ENCODE measurements at regions of chr18 and their contacts with region 1.

Region 1: GRCh38 chr18:45962461-45962860 is 4.7 kb downstream of the EPG5 start:
- DNase-seq: peak; percentile 24
- H3K4me3 Mint-ChIP-seq: no peak overlapping the region
- H3K27ac Mint-ChIP-seq: no peak overlapping the region
- H3K4me1 Mint-ChIP-seq: peaks cover 38% of the 10 kb centered on the region
- H3K27me3 Mint-ChIP-seq: no peaks in the 10 kb centered on the region
- CTCF ChIP-seq: no peak

Region 2: DNA sequence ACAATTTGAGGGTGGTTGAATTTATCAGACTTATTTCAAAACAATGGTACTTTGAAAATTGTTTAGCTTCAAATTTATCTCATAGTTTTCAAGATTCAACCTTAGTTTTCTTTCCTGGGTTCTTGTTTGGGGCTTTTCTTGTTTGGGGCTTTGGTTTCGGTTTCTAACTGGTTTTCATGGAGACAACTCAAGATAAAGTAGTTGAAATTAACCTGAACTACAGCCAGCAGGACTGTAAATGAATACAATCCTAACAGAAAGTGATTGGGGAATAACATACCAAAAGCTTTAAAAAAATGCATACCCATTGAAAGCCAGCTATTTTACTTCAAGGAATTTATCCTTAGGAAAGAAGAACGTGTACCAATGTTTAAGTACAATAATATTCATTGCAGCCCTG is 480.6 kb before region 1 on chr18:
- CTCF ChIA-PET with region 1: no interaction called
- POLR2A ChIA-PET with region 1: no interaction called
- intact Hi-C with region 1: no loop called
- DNase-seq: no peak
- H3K4me3 Mint-ChIP-seq: no peak overlapping the region
- H3K27ac Mint-ChIP-seq: no peak overlapping the region
- H3K4me1 Mint-ChIP-seq: peaks cover 5% of the 10 kb centered on the region
- H3K27me3 Mint-ChIP-seq: peaks cover 15% of the 10 kb centered on the region
- CTCF ChIP-seq: no peak

Region 3: DNA sequence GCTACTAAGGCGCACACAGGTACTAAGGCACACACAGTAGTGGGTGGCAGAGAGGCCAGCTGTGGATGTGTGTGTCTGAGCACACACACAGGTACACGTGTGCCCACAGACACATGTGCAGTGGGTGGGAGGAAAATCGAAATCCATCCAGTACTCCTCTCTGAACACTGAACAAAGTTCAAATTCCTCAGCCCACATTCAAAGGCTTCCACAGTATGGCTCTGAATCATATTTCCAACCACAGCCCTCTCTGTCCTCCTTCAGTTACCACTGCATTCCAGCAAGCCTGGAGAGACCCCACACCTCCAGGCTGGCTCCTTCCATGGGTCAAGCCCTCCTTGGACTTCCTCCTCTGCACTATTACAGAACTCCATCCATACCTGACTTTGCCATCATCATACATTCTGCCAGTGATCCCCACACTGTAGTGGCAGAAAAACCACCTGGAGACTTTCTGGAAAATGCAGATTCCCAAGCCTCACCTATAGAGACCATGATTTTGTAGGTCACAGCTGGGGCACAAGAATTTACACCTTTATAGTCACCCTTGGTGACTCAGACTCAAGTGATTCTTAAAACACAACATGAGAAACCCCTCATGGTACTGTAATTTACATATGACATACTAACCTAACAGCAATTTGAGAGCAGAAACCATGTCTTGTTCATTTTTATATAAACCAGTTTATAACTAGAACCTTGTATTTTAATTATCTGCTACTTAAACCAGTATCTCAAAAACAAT is 26.7 kb before region 1 on chr18:
- CTCF ChIA-PET with region 1: no interaction called
- POLR2A ChIA-PET with region 1: no interaction called
- intact Hi-C with region 1: no loop called
- DNase-seq: no peak
- H3K4me3 Mint-ChIP-seq: no peak overlapping the region
- H3K27ac Mint-ChIP-seq: no peak overlapping the region
- H3K4me1 Mint-ChIP-seq: peaks cover 8% of the 10 kb centered on the region
- H3K27me3 Mint-ChIP-seq: no peaks in the 10 kb centered on the region
- CTCF ChIP-seq: no peak

Region 4: DNA sequence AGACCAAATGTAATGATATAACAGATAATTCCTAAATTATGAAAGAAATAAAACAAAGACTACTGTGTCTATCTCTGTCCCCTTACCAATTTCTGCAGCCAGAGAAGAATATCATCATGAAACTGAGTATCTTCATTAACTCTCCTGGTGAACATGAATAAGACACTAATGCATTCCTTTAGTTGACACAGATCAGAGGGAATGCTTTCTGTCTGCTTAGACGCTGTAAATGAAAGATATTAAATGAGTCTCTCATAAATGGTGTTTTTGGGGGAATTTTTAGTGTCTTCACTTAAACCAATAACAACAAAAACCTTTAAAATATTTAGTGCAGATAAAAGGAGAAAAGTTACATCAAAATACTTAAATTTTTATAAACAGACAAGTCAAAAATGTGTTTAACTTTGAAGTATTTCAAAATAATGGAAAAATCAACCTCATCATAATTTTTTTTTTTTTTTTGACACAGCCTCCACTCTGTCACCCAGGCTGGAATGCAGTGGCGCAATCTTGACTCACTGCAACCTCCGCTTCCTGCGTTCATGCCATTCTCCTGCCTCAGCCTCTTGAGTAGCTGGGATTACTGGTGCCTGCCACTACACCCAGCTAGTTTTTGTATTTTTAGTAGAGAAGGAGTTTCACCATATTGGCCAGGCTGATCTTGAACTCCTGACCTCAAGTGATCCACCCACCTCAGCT is 11.3 kb before region 1 on chr18:
- CTCF ChIA-PET with region 1: interaction called, 10 read pairs
- POLR2A ChIA-PET with region 1: interaction called, 27 read pairs
- intact Hi-C with region 1: no loop called
- DNase-seq: peak; percentile 86
- H3K4me3 Mint-ChIP-seq: no peak overlapping the region
- H3K27ac Mint-ChIP-seq: peak overlapping the region; percentile 64
- H3K4me1 Mint-ChIP-seq: peaks cover 46% of the 10 kb centered on the region
- H3K27me3 Mint-ChIP-seq: no peaks in the 10 kb centered on the region
- CTCF ChIP-seq: no peak

Region 5: GRCh38 chr18:46577546-46577945 is 615.1 kb after region 1 on chr18:
- CTCF ChIA-PET with region 1: no interaction called
- POLR2A ChIA-PET with region 1: no interaction called
- intact Hi-C with region 1: no loop called
- DNase-seq: no peak
- H3K4me3 Mint-ChIP-seq: no peak overlapping the region
- H3K27ac Mint-ChIP-seq: no peak overlapping the region
- H3K4me1 Mint-ChIP-seq: no peaks in the 10 kb centered on the region
- H3K27me3 Mint-ChIP-seq: peaks cover 30% of the 10 kb centered on the region
- CTCF ChIP-seq: no peak